Activated naive CD4-positive, alpha-beta T cell treated with anti-CD3 and anti-CD28 coated beads for 36 hours (primary cell): ENCODE measurements at regions of chr2 and their contacts with region 1.

Region 1: DNA sequence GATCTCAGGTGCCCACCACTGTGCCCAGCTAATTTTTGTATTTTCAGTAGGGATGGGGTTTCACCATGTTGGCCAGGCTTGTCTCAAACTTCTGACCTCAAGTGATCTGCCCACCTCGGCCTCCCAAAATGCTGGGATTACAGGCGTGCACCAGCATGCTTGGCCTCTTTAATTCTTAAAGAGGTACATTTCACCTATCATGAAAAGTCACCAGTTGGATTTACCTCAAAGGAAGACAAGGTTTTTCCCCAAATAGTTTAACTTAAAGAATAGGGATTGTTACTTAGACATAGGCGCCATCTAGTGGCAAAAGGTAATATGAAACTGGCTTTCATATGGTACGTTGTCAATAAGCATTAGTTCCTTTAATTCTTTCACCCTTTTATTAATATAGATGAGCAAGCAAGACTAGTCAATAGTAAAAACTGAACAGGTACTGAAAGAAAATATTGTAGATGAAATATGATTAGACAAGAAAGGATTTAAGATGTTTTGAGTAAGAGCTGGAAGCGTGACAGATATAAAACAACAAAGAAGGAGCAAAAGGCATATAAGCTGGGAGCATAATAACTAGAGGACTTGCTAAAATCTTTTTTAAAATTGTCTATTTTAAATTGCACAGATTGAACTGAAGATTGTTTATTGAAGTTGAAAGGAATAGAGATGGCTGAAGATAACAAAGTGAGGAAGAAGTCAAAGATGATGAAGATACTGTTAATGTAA is 35.0 kb upstream of the PSMD14 start:
- DNase-seq: peak; percentile 37
- H3K4me3 Mint-ChIP-seq: no peak overlapping the region
- H3K27ac Mint-ChIP-seq: no peak overlapping the region
- H3K4me1 Mint-ChIP-seq: peaks cover 3% of the 10 kb centered on the region
- H3K27me3 Mint-ChIP-seq: peaks cover 2% of the 10 kb centered on the region

Region 2: GRCh38 chr2:160918906-160919503 is 354.2 kb before region 1 on chr2:
- CTCF ChIA-PET with region 1: no interaction called
- intact Hi-C with region 1: loop called (anchors 10 kb)
- DNase-seq: peak; percentile 58
- H3K4me3 Mint-ChIP-seq: no peak overlapping the region
- H3K27ac Mint-ChIP-seq: no peak overlapping the region
- H3K4me1 Mint-ChIP-seq: no peaks in the 10 kb centered on the region
- H3K27me3 Mint-ChIP-seq: no peaks in the 10 kb centered on the region

Region 3: GRCh38 chr2:161238560-161239325 is 34.5 kb before region 1 on chr2:
- CTCF ChIA-PET with region 1: interaction called, 4 read pairs
- intact Hi-C with region 1: loop called (anchors 1 kb)
- DNase-seq: peak; percentile 71
- H3K4me3 Mint-ChIP-seq: peak overlapping the region; percentile 84
- H3K27ac Mint-ChIP-seq: peak overlapping the region; percentile 47
- H3K4me1 Mint-ChIP-seq: peaks cover 47% of the 10 kb centered on the region
- H3K27me3 Mint-ChIP-seq: no peaks in the 10 kb centered on the region

Region 4: DNA sequence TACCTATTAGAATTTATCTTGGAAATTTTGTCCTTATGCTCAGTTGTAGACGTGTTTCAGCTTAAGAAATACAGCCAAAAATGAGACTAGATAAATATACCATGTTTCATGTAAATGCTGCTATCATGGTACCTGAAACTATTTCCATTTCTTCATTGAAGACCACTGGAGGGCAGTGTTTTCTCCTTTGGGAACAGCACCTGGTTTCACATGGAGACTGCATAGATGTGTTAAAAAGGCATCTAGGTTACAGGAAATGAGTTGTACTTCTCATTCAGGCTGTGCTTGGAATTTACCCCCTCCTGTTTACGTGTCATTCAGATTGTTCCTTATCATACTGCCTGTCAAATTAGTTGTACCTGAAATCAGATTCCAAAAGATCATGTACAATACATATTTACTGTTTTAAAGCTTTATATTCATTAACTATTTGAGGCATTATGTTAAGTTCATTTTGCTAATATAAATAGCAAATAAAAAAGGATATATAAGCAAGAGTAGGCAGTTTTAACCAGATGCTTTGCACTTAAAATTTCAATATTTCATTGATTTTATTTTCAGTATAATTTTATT is 22.2 kb before region 1 on chr2:
- CTCF ChIA-PET with region 1: interaction called, 11 read pairs
- intact Hi-C with region 1: loop called (anchors 1 kb)
- DNase-seq: peak; percentile 13
- H3K4me3 Mint-ChIP-seq: no peak overlapping the region
- H3K27ac Mint-ChIP-seq: no peak overlapping the region
- H3K4me1 Mint-ChIP-seq: peaks cover 19% of the 10 kb centered on the region
- H3K27me3 Mint-ChIP-seq: no peaks in the 10 kb centered on the region

Region 5: DNA sequence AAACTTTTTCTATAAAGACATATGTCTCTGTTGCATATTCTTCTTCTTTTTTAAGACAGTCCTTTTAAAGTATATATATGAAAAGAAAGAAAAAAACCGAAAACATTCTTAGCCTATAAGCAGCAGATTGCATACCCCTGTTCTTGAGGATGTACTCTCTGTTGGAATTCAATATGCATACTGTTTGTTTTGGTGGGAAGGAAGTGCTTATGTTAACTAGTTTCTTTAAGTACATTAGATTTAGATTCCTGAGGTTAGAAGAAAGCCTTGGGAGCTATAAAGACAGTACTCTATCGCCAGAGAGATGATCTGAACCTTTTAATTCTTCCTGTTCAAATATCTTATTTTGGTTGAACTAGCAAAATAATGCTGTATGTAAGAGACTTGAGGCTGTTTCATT is 96.1 kb after region 1 on chr2:
- CTCF ChIA-PET with region 1: no interaction called
- intact Hi-C with region 1: no loop called
- DNase-seq: no peak
- H3K4me3 Mint-ChIP-seq: no peak overlapping the region
- H3K27ac Mint-ChIP-seq: no peak overlapping the region
- H3K4me1 Mint-ChIP-seq: no peaks in the 10 kb centered on the region
- H3K27me3 Mint-ChIP-seq: no peaks in the 10 kb centered on the region